B cell (primary cell): ENCODE measurements at regions of chr3 and their contacts with region 1.

Region 1: DNA sequence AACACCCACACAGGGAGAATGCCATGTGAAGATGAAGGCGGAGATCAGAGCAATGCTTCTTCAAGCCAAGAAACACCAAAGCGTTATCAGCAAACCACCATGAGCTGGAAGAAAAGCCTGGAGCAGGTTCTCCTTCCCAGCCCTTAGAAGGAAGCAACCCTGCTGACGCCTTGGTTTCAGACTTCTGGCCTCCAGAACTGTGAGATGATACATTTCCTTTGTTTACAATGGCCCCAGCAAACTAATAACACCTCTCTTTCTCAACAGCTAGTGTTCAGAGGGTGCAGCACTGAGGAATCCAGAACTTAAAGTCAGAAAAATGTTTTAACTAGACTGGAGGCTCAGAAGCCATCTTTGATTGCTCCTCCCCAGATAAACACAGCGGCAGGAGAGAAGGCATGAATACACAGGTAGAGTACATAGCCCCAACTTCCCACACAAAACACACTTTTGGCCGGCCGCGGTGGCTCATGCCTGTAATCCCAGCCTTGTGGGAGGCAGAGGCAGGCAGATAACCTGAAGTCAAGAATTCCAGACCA is 132.4 kb upstream of the LPP start:
- DNase-seq: no peak
- ATAC-seq: no peak
- H3K4me3 ChIP-seq: no peak overlapping the region
- H3K4me3 Mint-ChIP-seq: no peak overlapping the region
- H3K27ac ChIP-seq: no peak overlapping the region
- H3K27ac Mint-ChIP-seq: no peak overlapping the region
- H3K4me1 ChIP-seq: no peaks in the 10 kb centered on the region
- H3K4me1 Mint-ChIP-seq: no peaks in the 10 kb centered on the region
- H3K27me3 ChIP-seq: no peaks in the 10 kb centered on the region
- H3K27me3 Mint-ChIP-seq: no peaks in the 10 kb centered on the region
- CTCF ChIP-seq: no peak

Region 2: GRCh38 chr3:188294823-188295487 is 273.4 kb after region 1 on chr3:
- CTCF ChIA-PET with region 1: no interaction called
- POLR2A ChIA-PET with region 1: no interaction called
- intact Hi-C with region 1: no loop called
- DNase-seq: no peak
- ATAC-seq: no peak
- H3K4me3 ChIP-seq: no peak overlapping the region
- H3K4me3 Mint-ChIP-seq: peak overlapping the region; percentile 49
- H3K27ac ChIP-seq: no peak overlapping the region
- H3K27ac Mint-ChIP-seq: no peak overlapping the region
- H3K4me1 ChIP-seq: peaks cover 55 to 57% of the 10 kb centered on the region in 2 donors
- H3K4me1 Mint-ChIP-seq: peaks cover 86% of the 10 kb centered on the region
- H3K27me3 ChIP-seq: no peaks in the 10 kb centered on the region
- H3K27me3 Mint-ChIP-seq: no peaks in the 10 kb centered on the region
- CTCF ChIP-seq: no peak

Region 3: GRCh38 chr3:188339410-188340295 is 318.1 kb after region 1 on chr3:
- CTCF ChIA-PET with region 1: no interaction called
- POLR2A ChIA-PET with region 1: no interaction called
- intact Hi-C with region 1: no loop called
- DNase-seq: peak; percentile 48
- ATAC-seq: peak; percentile 86
- H3K4me3 ChIP-seq: peak overlapping the region in 2 of 5 experiments; percentile 0 to 8
- H3K4me3 Mint-ChIP-seq: peak overlapping the region; percentile 68
- H3K27ac ChIP-seq: peak overlapping the region; percentile 25 to 60
- H3K27ac Mint-ChIP-seq: peak overlapping the region; percentile 85
- H3K4me1 ChIP-seq: peaks cover 20 to 23% of the 10 kb centered on the region in 2 donors
- H3K4me1 Mint-ChIP-seq: peaks cover 38% of the 10 kb centered on the region
- H3K27me3 ChIP-seq: no peaks in the 10 kb centered on the region
- H3K27me3 Mint-ChIP-seq: no peaks in the 10 kb centered on the region
- CTCF ChIP-seq: no peak

Region 4: DNA sequence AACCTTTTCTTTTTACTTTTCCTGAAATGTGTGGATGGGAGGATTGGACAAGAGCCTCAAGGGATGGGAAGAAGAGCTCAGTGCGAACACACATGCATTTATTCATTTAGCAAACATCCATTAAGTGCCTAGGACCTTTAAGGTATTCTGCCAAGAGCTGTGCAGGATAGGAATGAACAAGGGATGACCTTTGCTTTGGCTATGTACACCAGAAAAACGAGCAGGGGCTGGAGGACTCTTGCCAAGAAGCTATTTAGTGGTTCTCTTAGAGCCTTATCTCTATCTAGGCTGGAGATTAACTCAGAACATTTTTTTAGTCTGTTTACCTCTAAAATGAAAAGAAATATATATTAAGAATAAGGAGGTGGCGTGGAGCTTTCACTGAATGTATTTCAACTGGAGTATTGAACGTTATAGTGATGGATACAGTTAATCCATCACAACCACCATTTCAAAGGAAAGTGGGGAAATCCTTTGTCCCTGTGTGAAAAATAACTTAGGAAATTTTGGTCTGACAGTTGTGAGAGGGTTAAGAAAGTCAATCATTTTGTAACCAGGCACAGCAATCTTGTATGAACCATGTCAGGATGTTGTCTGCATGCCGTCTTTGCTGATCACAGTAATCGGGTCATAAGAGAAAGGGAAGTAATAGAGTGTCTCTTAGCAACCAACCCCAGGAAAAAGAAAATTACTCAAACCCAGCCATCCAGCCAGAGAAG is 411.4 kb after region 1 on chr3:
- CTCF ChIA-PET with region 1: no interaction called
- POLR2A ChIA-PET with region 1: no interaction called
- intact Hi-C with region 1: no loop called
- DNase-seq: peak; percentile 75
- ATAC-seq: peak; percentile 85
- H3K4me3 ChIP-seq: peak overlapping the region in 2 of 5 experiments; percentile 25 to 39
- H3K4me3 Mint-ChIP-seq: peak overlapping the region; percentile 81
- H3K27ac ChIP-seq: peak overlapping the region; percentile 95 to 99
- H3K27ac Mint-ChIP-seq: peak overlapping the region; percentile 98
- H3K4me1 ChIP-seq: peaks cover 57 to 83% of the 10 kb centered on the region in 2 donors
- H3K4me1 Mint-ChIP-seq: peaks cover 81% of the 10 kb centered on the region
- H3K27me3 ChIP-seq: no peaks in the 10 kb centered on the region
- H3K27me3 Mint-ChIP-seq: no peaks in the 10 kb centered on the region
- CTCF ChIP-seq: no peak

Region 5: DNA sequence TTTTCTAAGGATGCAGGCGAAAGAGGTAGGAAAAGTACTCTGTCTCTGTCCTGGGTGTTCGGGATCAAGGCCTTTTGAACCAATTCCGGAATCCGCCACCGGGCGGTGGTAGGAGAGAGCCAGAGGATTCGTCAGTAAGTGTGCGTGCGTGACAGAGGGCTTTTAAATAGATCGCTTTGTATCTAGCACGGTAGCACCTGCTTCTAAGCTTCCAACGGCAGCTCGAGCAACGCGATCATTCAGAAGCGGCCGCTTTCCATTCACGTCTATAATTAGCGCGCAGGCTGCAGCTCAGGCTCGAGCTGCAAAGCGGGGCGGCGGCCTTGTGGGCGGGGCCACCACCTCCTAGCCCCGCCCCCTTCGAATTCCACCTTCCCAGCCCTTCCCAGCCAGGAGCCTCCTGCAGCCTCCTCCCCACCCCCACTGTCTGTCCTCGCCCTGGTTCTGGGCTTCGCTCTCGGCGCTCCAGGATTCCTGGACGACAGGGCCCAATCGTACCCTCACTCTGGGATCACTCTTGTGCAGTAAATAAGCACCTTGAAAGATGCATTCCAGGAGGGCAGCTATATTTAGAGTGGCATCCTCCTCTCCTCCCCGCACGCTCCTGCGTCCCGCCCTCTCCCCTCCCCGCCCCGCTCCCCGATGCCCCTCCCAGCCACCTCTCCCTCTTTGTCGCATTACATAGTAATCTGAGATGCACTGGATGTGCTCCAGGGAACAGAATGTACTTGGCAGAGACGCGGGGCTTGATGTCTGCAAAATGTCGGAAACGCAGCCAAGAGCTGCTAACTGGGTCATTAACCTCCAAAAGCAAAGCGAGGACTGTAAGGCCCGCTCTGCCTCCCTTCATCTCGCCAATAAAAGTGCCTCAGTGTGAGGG is 926.1 kb after region 1 on chr3:
- CTCF ChIA-PET with region 1: no interaction called
- POLR2A ChIA-PET with region 1: interaction called, 12 read pairs
- intact Hi-C with region 1: no loop called
- DNase-seq: peak; percentile 37
- ATAC-seq: peak; percentile 36
- H3K4me3 ChIP-seq: peak overlapping the region; percentile 4 to 50 (median 30)
- H3K4me3 Mint-ChIP-seq: peak overlapping the region; percentile 52
- H3K27ac ChIP-seq: no peak overlapping the region
- H3K27ac Mint-ChIP-seq: no peak overlapping the region
- H3K4me1 ChIP-seq: peaks cover 9 to 13% of the 10 kb centered on the region in 2 donors
- H3K4me1 Mint-ChIP-seq: peaks cover 10% of the 10 kb centered on the region
- H3K27me3 ChIP-seq: peaks cover 0 to 22% (median 8%) of the 10 kb centered on the region in 4 experiments
- H3K27me3 Mint-ChIP-seq: peaks cover 15% of the 10 kb centered on the region
- CTCF ChIP-seq: no peak